PC-9 (cell line): ENCODE measurements at regions of chr18 and their contacts with region 1.

Region 1: DNA sequence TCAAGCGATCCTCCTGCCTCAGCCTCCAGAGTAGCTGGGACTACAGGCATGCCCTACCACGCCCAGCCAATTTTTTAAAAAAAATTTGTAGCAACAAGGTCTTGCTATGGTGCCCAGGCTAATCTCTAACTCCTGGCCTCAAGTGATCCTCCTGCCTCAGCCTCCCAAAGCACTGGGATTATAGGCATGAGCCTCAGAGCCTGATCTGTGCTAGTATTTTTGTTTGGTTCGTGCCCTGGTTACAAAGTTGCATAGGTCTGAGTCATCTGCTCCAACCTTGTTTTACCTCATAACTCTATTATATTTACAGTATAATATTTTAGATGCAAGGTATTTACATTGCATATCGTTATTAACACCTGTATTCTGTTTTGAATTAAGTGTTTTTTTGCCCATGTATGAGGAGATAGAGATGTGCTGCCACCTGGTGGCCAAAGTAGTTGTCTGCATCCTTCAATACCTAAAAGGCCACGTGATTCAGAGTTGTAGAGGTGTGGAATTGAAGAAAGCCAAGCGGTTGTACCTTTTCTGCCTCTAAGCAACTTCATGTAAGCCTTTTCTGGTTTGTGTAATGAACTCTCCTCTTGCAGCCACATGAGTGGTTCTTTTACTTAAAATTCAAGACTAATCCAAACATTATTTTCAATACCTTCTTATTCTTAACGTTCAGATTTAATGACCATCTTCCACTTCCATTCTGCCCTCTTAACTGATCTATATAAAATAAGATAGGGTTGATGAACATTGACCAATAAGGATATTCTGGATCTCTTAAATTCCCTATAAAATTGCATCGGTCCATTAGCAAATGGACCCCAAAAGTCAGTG is 19.9 kb upstream of the CABYR start:
- DNase-seq: peak; percentile 41 to 70
- H3K4me3 ChIP-seq: no peak overlapping the region
- H3K27ac ChIP-seq: no peak overlapping the region
- H3K4me1 ChIP-seq: peaks cover 4% of the 10 kb centered on the region; the same call in 1 of the 2 replicates
- H3K27me3 ChIP-seq: no peaks in the 10 kb centered on the region
- CTCF ChIP-seq: peak; percentile 85

Region 2: DNA sequence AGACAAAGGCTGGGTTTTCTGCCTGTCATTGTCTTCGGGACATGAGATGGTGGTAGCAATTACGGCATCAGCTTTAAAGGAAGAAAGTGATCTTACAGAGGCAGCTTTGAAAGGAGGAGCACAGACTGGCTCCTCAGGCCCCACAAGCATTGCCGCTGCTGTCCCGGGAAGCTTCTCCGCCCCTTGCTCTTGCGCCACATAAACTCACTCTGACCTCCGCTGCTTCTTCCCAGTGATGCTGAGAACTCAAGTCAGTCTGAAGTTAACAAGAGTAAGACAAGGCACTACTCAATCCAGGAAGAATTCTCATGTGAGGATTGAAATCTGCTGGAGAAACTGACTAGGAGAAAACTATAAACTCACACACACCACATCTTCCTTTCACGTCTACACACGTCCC is 778.3 kb before region 1 on chr18:
- CTCF ChIA-PET with region 1: no interaction called
- POLR2A ChIA-PET with region 1: no interaction called
- intact Hi-C with region 1: no loop called
- DNase-seq: no peak
- H3K4me3 ChIP-seq: no peak overlapping the region
- H3K27ac ChIP-seq: no peak overlapping the region
- H3K4me1 ChIP-seq: no peaks in the 10 kb centered on the region
- H3K27me3 ChIP-seq: no peaks in the 10 kb centered on the region
- CTCF ChIP-seq: no peak

Region 3: GRCh38 chr18:23515911-23516546 is 602.9 kb before region 1 on chr18:
- CTCF ChIA-PET with region 1: no interaction called
- POLR2A ChIA-PET with region 1: no interaction called
- intact Hi-C with region 1: loop called (anchors 5 kb)
- DNase-seq: peak; percentile 48 to 58
- H3K4me3 ChIP-seq: no peak overlapping the region
- H3K27ac ChIP-seq: no peak overlapping the region
- H3K4me1 ChIP-seq: no peaks in the 10 kb centered on the region
- H3K27me3 ChIP-seq: no peaks in the 10 kb centered on the region
- CTCF ChIP-seq: peak; percentile 80

Region 4: DNA sequence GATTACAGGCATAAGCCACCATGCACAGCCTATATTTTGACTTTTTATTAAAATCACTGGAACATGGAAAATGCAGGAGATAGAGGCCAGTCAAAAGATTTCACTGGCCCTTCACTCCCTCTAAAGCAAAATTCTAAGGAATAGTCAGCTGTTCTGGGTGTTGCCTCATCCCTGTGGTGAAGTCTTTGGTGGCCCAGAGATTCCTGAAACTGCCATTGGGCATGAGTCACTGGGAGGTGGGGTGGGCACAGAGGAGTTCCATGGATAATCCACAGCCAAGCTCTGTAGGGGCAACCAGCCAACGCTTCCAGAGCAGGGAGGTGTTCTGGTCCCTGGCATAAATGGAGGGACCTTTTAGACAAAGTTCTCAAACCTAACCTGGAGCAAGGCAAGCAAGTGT is 194.2 kb before region 1 on chr18:
- CTCF ChIA-PET with region 1: no interaction called
- POLR2A ChIA-PET with region 1: no interaction called
- intact Hi-C with region 1: loop called (anchors 5 kb)
- DNase-seq: no peak
- H3K4me3 ChIP-seq: no peak overlapping the region
- H3K27ac ChIP-seq: no peak overlapping the region
- H3K4me1 ChIP-seq: no peaks in the 10 kb centered on the region
- H3K27me3 ChIP-seq: no peaks in the 10 kb centered on the region
- CTCF ChIP-seq: no peak

Region 5: DNA sequence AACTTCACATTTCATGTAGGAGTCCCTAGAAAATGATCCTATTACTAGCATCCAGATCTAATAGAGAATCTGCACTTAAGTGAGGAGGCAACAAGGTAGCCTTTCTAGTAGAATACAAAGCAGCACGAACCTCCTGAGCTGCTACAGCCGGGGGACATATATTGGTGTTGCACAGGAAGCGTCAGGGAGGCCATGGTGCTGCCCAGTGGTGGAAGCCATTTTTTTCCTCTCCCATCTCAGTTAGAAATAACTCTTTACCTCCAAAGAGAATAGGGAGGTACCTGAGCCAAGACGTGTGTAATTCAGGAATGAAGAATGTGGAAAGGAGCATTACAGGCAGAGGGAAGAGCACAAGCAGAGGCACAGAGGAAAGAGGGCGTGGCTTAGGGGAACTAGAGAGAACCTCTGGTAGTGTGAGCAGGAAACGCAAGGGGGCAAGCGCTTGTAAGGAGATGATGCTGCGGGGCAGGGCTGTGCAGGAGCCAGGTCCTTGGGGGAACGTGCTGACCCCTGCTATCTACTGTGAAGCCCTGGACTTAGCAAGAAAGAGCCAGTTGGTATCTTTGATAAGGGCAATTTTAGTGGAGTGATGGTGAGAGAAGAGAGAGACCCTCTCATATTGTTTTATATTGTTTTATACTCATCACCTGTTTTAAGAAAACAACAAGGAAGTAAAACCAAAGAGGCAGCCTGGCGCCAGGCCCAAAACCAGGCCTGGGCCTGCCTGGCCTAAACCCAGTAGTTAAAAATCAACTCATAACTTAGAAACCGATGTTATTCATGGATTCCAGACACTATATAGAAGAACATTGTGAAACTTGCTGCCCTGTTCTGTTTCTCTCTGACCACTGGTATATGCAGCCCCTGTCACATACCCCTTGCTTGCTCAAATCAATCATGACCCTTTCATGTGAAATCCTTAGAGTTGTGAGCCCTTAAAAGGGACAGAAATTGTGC is 154.4 kb before region 1 on chr18:
- CTCF ChIA-PET with region 1: no interaction called
- POLR2A ChIA-PET with region 1: no interaction called
- intact Hi-C with region 1: loop called (anchors 5 kb)
- DNase-seq: no peak
- H3K4me3 ChIP-seq: no peak overlapping the region
- H3K27ac ChIP-seq: no peak overlapping the region
- H3K4me1 ChIP-seq: no peaks in the 10 kb centered on the region
- H3K27me3 ChIP-seq: no peaks in the 10 kb centered on the region
- CTCF ChIP-seq: no peak

Region 6: DNA sequence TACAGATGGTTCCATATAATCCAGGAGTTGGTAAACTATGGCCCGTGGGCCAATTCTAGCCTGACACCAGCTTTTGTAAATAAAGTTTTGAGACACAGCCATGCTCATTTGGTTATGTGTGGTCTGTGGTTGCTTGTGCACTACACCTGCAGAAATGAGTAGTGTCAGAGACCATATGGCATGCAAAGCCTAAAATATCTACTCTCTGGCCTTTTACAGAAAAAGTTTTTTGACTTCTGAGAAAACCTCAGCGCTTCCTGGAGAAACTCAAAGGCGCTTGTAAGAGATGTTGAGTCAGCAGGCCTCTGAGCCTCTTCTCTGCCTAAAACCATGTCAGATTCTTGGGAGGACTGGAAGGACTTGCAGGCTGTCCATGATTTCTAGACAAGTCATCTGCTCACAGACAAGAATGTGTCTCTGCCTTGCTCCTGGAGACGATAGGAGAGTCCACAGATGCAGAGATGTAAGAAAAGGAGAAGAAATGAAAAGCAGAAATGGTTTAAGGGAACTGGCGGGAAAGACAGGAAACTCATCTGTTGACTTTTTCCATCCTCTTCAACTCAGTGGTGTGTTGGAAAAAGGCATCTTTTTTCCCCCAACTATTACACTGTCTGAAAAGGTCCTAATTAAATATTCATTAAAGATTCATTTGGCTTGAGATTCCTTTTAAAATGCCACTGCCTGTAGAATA is 99.2 kb before region 1 on chr18:
- CTCF ChIA-PET with region 1: interaction called, 4 read pairs
- POLR2A ChIA-PET with region 1: no interaction called
- intact Hi-C with region 1: loop called (anchors 10 kb)
- DNase-seq: no peak
- H3K4me3 ChIP-seq: no peak overlapping the region
- H3K27ac ChIP-seq: no peak overlapping the region
- H3K4me1 ChIP-seq: peaks cover 50% of the 10 kb centered on the region
- H3K27me3 ChIP-seq: no peaks in the 10 kb centered on the region
- CTCF ChIP-seq: no peak

Region 7: GRCh38 chr18:24103320-24104021 is 15.5 kb before region 1 on chr18:
- CTCF ChIA-PET with region 1: no interaction called
- POLR2A ChIA-PET with region 1: interaction called, 17 read pairs
- intact Hi-C with region 1: no loop called
- DNase-seq: no peak
- H3K4me3 ChIP-seq: no peak overlapping the region
- H3K27ac ChIP-seq: no peak overlapping the region
- H3K4me1 ChIP-seq: no peaks in the 10 kb centered on the region
- H3K27me3 ChIP-seq: no peaks in the 10 kb centered on the region
- CTCF ChIP-seq: no peak

Region 8: GRCh38 chr18:24136967-24137373 is 18.0 kb after region 1 on chr18:
- CTCF ChIA-PET with region 1: no interaction called
- POLR2A ChIA-PET with region 1: no interaction called
- intact Hi-C with region 1: no loop called
- DNase-seq: peak in 1 of 2 experiments; percentile 71
- H3K4me3 ChIP-seq: no peak overlapping the region
- H3K27ac ChIP-seq: peak overlapping the region; percentile 91
- H3K4me1 ChIP-seq: peaks cover 31% of the 10 kb centered on the region
- H3K27me3 ChIP-seq: no peaks in the 10 kb centered on the region
- CTCF ChIP-seq: no peak